Heart left ventricle (tissue), 16 donors: ENCODE measurements at regions of chr11 and their contacts with region 1.

Region 1: GRCh38 chr11:118791111-118791965 is at the start of gene DDX6:
- DNase-seq: peak; percentile 92 to 97 (median 94)
- ATAC-seq: peak; percentile 70 to 89 (median 85)
- H3K4me3 ChIP-seq: peak within 1 kb of the TSS; percentile 66 to 98 (median 78)
- H3K27ac ChIP-seq: peak within 1 kb of the TSS; percentile 92 to 100 (median 99)
- H3K4me1 ChIP-seq: peaks cover 0 to 48% (median 36%) of the 10 kb centered on the region in 12 donors
- H3K27me3 ChIP-seq: no peaks in the 10 kb centered on the region
- CTCF ChIP-seq: peak in 10 of 12 donors; percentile 10 to 54 (median 38)
- POLR2A ChIP-seq: peak; percentile 39 to 87
- total RNA-seq, gene DDX6: 83.7 to 166 (median 114) TPM

Region 2: GRCh38 chr11:118607401-118608359 is 183.7 kb before region 1 on chr11 and contains the start of gene PHLDB1:
- intact Hi-C with region 1: no loop called
- DNase-seq: peak; percentile 81 to 86 (median 83)
- ATAC-seq: peak; percentile 12 to 54 (median 49)
- H3K4me3 ChIP-seq: peak within 1 kb of the TSS; percentile 63 to 99 (median 82)
- H3K27ac ChIP-seq: peak within 1 kb of the TSS; percentile 86 to 100 (median 95)
- H3K4me1 ChIP-seq: peaks cover 0 to 76% (median 45%) of the 10 kb centered on the region in 12 donors
- H3K27me3 ChIP-seq: peaks cover 0 to 18% (median 0%) of the 10 kb centered on the region in 9 donors
- CTCF ChIP-seq: peak; percentile 37 to 67 (median 52)
- POLR2A ChIP-seq: peak in 1 of 2 donors; percentile 68
- total RNA-seq, gene PHLDB1: 86.0 to 124 (median 113) TPM

Region 3: DNA sequence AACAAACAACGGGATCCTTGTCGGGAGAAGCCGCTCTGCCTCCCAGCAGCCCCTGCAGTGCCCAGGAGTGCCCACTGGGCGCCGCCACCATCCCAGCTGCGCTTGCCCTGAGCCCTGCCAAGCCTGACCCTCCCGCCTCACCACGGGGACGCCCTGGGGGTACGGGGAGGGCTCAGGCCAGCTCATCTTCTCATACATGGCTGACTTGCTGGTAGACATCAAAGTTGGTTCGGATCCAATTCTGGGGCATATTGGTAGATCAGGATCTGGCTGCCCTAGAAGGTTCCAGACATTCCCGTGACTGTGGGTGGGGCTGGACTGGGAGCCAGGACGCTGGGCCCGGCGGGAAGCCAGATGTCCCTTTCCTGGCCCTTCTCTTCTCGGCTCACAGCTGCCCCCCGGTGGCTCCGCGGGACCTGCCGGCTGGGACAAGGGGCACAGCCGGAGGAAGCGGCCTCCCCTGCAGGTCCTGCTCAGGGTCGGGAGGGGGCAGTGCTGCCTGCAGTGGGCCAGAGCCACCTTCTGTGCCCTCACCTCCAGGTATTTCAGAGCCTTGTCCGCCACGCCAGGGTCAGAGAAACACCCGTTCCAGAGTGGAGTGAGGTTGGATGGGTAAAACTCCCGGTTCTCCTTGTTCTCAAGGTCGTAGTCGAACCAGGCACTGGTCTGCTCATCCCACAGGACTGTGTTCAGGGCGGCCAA is 101.3 kb before region 1 on chr11:
- intact Hi-C with region 1: loop called in 6 of 10 experiments (anchors 2 to 10 kb)
- DNase-seq: peak; percentile 88 to 97 (median 95)
- ATAC-seq: peak; percentile 95 to 97 (median 96)
- H3K4me3 ChIP-seq: peak overlapping the region in 11 of 12 donors; percentile 28 to 56 (median 51)
- H3K27ac ChIP-seq: peak overlapping the region in 11 of 12 donors; percentile 54 to 82 (median 74)
- H3K4me1 ChIP-seq: peaks cover 0 to 30% (median 8%) of the 10 kb centered on the region in 12 donors
- H3K27me3 ChIP-seq: no peaks in the 10 kb centered on the region
- CTCF ChIP-seq: peak; percentile 65 to 91 (median 86)
- POLR2A ChIP-seq: no peak

Region 4: DNA sequence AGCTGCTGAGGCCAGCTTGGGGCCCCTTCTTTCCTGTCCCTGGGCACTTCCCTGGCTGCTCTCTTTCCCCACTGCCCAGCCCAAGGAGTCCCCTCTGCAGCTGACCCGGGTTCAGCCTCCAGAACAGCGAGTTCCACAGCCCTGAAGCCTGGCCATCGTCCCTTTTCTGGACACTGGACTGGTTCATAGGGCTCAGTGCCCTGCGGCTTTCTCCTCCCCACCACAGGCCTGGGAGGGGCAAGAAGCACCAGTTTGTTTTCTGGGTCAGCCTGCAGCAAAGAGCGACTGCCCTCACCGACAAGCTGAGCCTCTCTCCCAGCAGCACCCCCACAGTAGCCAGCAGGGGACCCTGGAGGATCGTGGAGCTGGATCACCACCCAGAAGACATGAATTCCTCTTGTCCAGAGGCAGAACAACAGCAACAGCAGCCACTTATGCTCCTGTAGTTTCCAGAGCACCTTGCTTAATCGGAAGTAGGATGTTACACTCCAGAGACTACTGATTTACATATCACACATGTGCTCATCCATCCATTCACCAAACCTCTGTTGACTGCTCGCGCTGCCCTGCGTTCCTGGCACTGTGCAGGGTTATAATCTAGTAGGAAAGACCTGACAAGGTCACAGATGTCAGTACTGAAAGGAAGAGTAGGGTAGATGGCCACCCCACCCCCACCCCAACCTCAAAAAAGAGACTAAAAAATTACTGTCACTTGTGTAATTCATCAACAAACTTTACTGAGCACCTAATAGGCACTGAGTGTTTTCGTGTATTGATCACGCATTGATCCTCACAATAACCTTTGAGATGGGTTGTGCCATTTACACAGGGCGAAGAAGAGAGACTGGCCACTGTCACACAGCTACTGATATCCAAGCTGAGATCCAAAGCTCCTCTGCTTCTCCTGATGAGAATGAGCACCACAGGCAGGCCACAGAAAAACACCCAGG is 79.3 kb after region 1 on chr11:
- intact Hi-C with region 1: loop called in 1 of 10 experiments (anchors 10 kb)
- DNase-seq: peak in 4 of 5 donors; percentile 35 to 72 (median 61)
- ATAC-seq: peak; percentile 79 to 88 (median 81)
- H3K4me3 ChIP-seq: peak overlapping the region in 8 of 12 donors; percentile 18 to 46 (median 34)
- H3K27ac ChIP-seq: peak overlapping the region; percentile 41 to 89 (median 71)
- H3K4me1 ChIP-seq: peaks cover 0 to 20% (median 12%) of the 10 kb centered on the region in 12 donors
- H3K27me3 ChIP-seq: no peaks in the 10 kb centered on the region
- CTCF ChIP-seq: peak in 6 of 12 donors; percentile 4 to 34 (median 18)
- POLR2A ChIP-seq: no peak

Region 5: DNA sequence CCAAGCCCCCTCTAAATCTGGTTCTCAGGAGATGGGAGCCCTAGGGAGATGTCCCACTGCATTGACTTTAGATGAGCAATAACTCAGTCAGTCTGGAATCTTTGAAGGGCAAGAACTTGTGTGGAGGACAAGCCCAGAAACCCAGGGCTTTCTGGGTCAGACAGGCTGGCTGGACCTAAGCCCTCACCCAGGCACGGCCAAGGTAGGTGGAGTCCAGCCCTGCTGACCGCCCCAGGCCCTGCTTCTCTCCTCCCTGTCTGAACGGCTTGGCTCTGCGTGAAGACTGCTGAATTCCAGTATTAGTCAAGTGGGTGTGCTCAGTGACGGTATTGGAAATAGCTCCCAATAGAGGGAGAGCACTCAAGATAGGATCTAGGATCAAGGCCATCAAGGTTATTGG is 98.4 kb after region 1 on chr11:
- intact Hi-C with region 1: loop called in 1 of 10 experiments (anchors 5 kb)
- DNase-seq: peak; percentile 65 to 85 (median 79)
- ATAC-seq: peak; percentile 71 to 85 (median 82)
- H3K4me3 ChIP-seq: no peak overlapping the region
- H3K27ac ChIP-seq: peak overlapping the region in 7 of 12 donors; percentile 26 to 83 (median 54)
- H3K4me1 ChIP-seq: peaks cover 0 to 38% (median 28%) of the 10 kb centered on the region in 12 donors
- H3K27me3 ChIP-seq: no peaks in the 10 kb centered on the region
- CTCF ChIP-seq: no peak
- POLR2A ChIP-seq: no peak